ENCODE measurements at regions of chr4 and their contacts with region 1.

Region 1: DNA sequence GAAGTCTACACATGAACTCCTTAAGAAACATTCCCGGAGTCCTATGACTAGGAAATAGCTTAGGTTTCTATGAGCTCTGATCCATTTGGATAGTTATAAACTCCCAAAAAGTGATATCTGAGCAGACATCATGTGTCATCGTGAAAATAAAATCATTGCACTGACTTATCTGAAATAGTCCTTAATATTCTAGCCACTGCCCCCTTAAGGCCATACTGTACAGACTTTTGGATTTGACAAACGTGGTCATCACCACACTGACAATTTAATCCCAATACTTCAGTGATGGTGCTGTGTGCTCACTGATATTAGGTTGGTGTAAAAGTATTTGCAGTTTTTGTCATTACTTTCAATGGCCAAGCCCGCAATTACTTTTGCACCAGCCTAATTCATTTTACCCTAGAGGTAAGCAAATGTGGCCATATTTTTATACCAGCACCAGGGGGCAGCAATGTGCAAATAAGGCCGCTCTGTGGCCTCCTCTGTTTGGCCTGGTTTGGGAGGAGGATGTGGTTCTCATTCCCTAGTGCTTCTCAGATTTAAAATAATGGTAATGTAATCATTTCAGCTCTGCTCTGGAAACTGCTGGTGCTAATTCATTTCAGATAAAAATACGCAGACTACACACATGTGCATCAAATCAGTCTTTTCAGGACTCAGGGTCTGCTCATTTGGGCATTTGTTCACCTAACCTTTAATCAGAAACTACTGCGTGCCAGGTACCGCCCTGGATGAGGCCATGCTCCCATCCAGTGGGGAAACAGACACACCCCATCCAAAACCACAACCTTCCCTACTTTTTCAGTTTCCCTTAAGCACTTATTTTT is 196.4 kb upstream of the C1QTNF7 start:
- DNase-seq: peak; percentile 54
- ATAC-seq: peak; percentile 88 to 89
- H3K4me3 ChIP-seq: no peak overlapping the region
- H3K27ac ChIP-seq: no peak overlapping the region
- H3K4me1 ChIP-seq: peaks cover 27% of the 10 kb centered on the region
- H3K27me3 ChIP-seq: no peaks in the 10 kb centered on the region
- CTCF ChIP-seq: peak; percentile 71

Region 2: DNA sequence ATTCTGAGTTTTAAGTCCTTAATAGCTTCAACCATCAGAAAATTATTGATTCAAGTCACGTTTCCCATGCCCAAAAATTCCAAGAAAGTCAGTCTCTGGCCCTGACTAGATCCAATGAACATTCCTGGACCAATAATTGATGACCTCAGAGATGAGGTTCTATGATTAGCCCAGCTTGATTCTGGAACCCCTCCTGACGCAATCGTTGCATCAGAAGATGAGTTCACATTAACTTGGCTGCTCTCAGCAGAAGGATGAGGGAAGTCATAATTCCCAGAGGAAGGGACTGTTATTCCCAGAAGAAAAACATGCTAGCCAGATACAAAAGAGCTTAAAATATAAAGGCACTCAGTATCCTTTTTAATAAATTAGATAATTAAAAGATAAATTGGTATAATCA is 263.5 kb before region 1 on chr4:
- intact Hi-C with region 1: no loop called
- DNase-seq: no peak
- ATAC-seq: no peak
- H3K4me3 ChIP-seq: no peak overlapping the region
- H3K27ac ChIP-seq: no peak overlapping the region
- H3K4me1 ChIP-seq: no peaks in the 10 kb centered on the region
- H3K27me3 ChIP-seq: no peaks in the 10 kb centered on the region
- CTCF ChIP-seq: no peak

Region 3: GRCh38 chr4:15291122-15291521 is 59.6 kb after region 1 on chr4:
- intact Hi-C with region 1: no loop called
- DNase-seq: no peak
- ATAC-seq: no peak
- H3K4me3 ChIP-seq: no peak overlapping the region
- H3K27ac ChIP-seq: no peak overlapping the region
- H3K4me1 ChIP-seq: no peaks in the 10 kb centered on the region
- H3K27me3 ChIP-seq: no peaks in the 10 kb centered on the region
- CTCF ChIP-seq: no peak

Region 4: GRCh38 chr4:15444872-15445547 is 213.5 kb after region 1 on chr4:
- intact Hi-C with region 1: no loop called
- DNase-seq: no peak
- ATAC-seq: no peak
- H3K4me3 ChIP-seq: no peak overlapping the region
- H3K27ac ChIP-seq: no peak overlapping the region
- H3K4me1 ChIP-seq: no peaks in the 10 kb centered on the region
- H3K27me3 ChIP-seq: no peaks in the 10 kb centered on the region
- CTCF ChIP-seq: no peak

Region 5: GRCh38 chr4:15457406-15458201 is 226.1 kb after region 1 on chr4:
- intact Hi-C with region 1: loop called (anchors 5 kb)
- DNase-seq: no peak
- ATAC-seq: peak; percentile 84 to 86
- H3K4me3 ChIP-seq: no peak overlapping the region
- H3K27ac ChIP-seq: no peak overlapping the region
- H3K4me1 ChIP-seq: peaks cover 15% of the 10 kb centered on the region
- H3K27me3 ChIP-seq: no peaks in the 10 kb centered on the region
- CTCF ChIP-seq: peak; percentile 71